Breast epithelium (tissue), 4 donors: ENCODE measurements at regions of chr1 and their contacts with region 1.

Region 1: DNA sequence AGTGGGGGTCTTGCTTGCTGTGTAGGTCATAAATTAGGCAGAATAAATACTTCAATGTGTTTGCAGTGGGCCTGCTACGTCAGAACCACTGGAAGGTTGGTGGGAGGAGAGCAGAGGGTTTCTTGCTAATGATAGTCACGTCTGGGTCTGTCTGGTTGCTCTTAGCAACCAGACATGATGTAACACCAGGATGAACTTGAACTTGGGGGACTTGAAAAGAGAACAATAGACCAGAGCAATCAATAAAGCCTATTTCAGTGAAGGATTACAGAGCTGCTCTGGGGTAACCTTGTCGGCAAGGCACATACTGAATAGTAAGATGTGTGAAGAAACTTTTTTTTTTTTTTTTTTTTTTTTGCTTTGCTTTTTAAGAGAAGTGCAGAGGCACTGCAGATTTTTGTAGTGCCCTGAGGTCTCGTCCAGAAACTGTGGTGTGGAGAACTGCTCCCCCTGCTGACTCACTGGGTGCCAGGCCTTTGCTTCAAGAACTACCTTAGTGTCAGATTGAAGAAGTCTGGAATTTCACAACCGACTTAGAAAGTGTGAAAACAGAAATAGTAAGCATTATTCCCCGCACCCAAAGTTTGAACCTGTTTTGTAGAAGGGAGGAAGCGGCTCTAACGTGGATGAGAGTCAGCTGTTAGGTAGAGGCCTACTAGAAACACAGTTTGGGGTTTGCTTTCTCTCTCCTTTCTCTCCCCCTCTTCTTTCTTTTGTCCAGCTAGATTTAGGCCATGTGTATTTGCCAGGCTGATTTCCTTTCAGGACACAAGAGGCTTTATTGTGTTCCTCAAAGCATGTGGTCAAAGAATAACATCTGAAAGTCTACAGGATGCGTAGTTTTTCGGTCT is 271.6 kb downstream of the TM2D1 start:
- DNase-seq: peak; percentile 85 to 93
- H3K4me3 ChIP-seq: no peak overlapping the region
- H3K27ac ChIP-seq: peak overlapping the region; percentile 69 to 75
- H3K4me1 ChIP-seq: peaks cover 0 to 23% of the 10 kb centered on the region in 2 donors
- H3K27me3 ChIP-seq: no peaks in the 10 kb centered on the region
- CTCF ChIP-seq: peak; percentile 28 to 78 (median 77)
- POLR2A ChIP-seq: no peak

Region 2: DNA sequence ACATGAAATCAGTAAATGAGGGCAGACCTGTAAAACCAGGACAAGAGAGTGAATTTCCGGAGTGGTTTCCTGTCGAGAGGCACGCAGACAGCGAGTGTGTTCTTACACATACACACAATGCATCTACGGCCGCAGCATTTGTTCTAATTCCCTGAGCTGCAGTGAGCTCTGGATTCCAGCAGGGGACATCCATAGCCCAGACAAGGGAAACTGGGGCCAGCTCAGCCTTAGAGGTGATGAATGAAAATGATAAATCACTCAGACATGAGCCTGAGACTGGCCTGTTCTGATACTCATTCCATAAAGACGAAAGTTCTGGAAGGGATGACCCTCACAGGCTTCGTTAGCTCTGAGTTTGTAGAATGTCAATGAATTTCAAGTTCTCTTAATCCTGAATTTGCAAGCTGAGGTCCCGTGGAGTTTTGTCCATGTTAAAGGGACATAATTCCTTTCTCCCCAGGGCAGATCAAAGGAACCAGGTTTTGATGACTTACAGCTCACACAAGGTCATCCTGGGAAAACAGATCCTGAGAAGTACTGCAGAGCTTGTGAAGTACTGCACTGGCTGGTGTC is 1171.9 kb before region 1 on chr1:
- intact Hi-C with region 1: loop called (anchors 10 kb)
- DNase-seq: peak; percentile 24 to 61
- H3K4me3 ChIP-seq: no peak overlapping the region
- H3K27ac ChIP-seq: no peak overlapping the region
- H3K4me1 ChIP-seq: no peaks in the 10 kb centered on the region
- H3K27me3 ChIP-seq: no peaks in the 10 kb centered on the region
- CTCF ChIP-seq: peak; percentile 49 to 89 (median 77)
- POLR2A ChIP-seq: no peak

Region 3: DNA sequence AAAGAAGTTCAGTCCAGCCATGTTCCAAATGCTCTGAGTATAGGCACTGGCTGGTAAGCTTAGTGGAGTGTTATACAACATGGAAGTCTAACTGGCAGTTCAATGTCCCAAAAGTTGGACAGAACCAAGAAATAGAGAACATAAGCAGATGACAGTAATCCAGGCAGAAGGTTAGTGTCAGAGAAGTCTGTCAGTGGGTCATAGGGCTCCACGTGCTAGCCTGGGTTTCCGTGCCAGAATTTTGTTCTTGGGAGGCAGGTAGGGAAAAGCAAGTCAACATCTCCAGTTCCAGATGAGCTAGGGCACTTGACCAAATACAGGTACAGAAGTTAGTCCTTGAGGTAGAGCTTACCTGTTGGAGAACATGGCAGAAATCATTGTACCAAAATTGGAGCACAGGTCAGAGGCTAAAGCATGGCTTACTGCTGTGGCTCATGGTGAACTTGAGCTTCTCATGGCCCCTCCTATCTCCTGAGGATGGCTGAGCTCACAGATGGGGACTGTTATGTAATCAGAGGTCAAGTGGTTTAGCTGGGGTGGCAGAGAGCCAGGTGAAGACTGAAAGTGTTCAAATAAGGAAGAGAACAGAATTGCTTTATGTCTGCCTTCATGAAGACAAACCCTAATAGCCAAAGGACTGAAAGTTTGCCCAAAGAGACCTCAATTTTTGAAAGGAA is 200.1 kb before region 1 on chr1:
- intact Hi-C with region 1: no loop called
- DNase-seq: peak; percentile 58 to 81
- H3K4me3 ChIP-seq: no peak overlapping the region
- H3K27ac ChIP-seq: peak overlapping the region; percentile 45
- H3K4me1 ChIP-seq: peaks cover 0 to 10% of the 10 kb centered on the region in 2 donors
- H3K27me3 ChIP-seq: no peaks in the 10 kb centered on the region
- CTCF ChIP-seq: no peak
- POLR2A ChIP-seq: no peak